GM12878 (cell line): ENCODE measurements at regions of chr14 and their contacts with region 1.

Region 1: DNA sequence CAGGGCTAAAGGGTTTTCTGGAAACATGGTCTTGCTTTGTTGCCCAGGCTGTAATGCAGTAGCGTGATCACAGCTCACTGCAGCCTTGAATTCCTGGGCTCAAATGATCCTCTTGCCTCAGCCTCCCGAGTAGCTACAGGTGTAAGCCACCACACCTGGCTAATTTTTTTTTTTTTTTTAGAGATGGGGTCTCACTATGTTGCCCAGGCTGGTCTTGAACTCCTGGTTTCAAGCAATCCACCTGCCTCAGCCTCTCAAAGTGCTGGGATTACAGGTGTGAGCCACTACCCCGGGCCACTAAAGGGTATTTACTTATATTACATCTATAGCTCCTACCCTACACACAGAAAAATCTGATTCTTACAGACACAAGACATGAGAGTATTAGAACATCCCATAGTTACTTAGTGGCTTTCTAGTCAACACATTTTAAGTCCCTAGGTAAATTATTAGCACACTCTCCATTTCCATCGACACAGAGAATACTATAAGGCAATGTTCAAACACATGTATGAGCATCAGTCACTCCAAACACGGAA is 6.2 kb upstream of the DCAF11 start:
- DNase-seq: no peak
- ATAC-seq: peak; percentile 55; the same call in 2 of the 3 replicates
- H3K4me3 ChIP-seq: no peak overlapping the region
- H3K27ac ChIP-seq: peak overlapping the region; percentile 69; the same call in 1 of the 2 replicates
- H3K4me1 ChIP-seq: peaks cover 7% of the 10 kb centered on the region
- H3K27me3 ChIP-seq: no peaks in the 10 kb centered on the region
- CTCF ChIP-seq: no peak
- EP300 ChIP-seq: no peak
- POLR2A ChIP-seq: no peak
- RAD21 ChIP-seq: no peak

Region 2: GRCh38 chr14:23694085-23694975 is 414.1 kb before region 1 on chr14:
- CTCF ChIA-PET with region 1: no interaction called
- POLR2A ChIA-PET with region 1: no interaction called
- RAD21 ChIA-PET with region 1: no interaction called
- SMC1A ChIA-PET with region 1: no interaction called
- in situ Hi-C with region 1: no loop called
- intact Hi-C with region 1: no loop called
- DNase-seq: no peak
- ATAC-seq: no peak
- H3K4me3 ChIP-seq: no peak overlapping the region
- H3K27ac ChIP-seq: no peak overlapping the region
- H3K4me1 ChIP-seq: no peaks in the 10 kb centered on the region
- H3K27me3 ChIP-seq: peaks cover 5 to 6% of the 10 kb centered on the region in 2 experiments
- CTCF ChIP-seq: no peak
- EP300 ChIP-seq: no peak
- POLR2A ChIP-seq: no peak
- RAD21 ChIP-seq: no peak

Region 3: DNA sequence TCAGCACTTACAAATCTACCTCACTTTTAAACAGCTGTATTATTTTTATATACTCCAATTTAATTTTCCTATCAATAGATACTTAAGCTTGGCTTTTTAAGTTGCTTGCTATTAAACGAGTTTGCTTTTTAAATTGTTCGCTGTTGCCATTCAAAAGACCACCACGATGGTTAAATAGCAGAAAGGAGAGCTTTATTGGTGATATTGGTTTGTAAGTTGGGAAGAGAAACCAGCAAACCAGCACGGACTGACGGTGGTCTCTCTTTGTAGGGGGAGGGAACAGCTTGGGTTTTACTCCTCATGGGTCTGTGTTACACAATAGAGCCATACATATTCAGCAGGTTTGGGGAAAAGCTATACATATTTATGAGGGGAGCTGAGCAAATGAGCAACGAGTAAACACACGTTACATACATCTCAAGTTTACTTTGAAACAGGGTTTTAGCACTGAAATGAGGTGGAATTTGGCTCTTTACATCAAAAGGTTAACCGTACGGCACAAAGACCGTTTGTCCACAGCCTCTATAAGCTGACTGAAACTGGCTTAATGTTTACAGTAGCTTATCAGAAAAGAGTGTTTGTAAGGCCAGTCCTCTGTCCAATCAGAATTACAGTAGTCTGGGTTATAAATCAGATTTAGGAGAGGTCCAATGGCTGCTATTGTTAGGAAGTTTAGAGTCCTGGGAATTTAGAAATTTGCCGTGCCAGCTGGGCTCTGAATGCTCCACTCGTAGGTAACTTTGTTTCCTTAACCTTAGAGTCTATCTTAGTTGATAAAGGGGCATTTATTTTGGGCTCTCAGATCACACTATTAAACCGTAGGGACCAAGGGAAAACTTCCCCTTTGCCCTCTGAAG is 224.5 kb before region 1 on chr14:
- CTCF ChIA-PET with region 1: no interaction called
- POLR2A ChIA-PET with region 1: no interaction called
- RAD21 ChIA-PET with region 1: no interaction called
- SMC1A ChIA-PET with region 1: no interaction called
- in situ Hi-C with region 1: no loop called
- intact Hi-C with region 1: no loop called
- DNase-seq: no peak
- ATAC-seq: no peak
- H3K4me3 ChIP-seq: no peak overlapping the region
- H3K27ac ChIP-seq: no peak overlapping the region
- H3K4me1 ChIP-seq: no peaks in the 10 kb centered on the region
- H3K27me3 ChIP-seq: no peaks in the 10 kb centered on the region
- CTCF ChIP-seq: no peak
- EP300 ChIP-seq: no peak
- POLR2A ChIP-seq: no peak
- RAD21 ChIP-seq: no peak

Region 4: GRCh38 chr14:24036169-24036962 is 72.0 kb before region 1 on chr14:
- CTCF ChIA-PET with region 1: interaction called, 10 read pairs
- POLR2A ChIA-PET with region 1: no interaction called
- RAD21 ChIA-PET with region 1: interaction called, 3 read pairs
- SMC1A ChIA-PET with region 1: interaction called, 3 read pairs
- in situ Hi-C with region 1: no loop called
- intact Hi-C with region 1: no loop called
- DNase-seq: no peak
- ATAC-seq: peak; percentile 91
- H3K4me3 ChIP-seq: peak overlapping the region; percentile 73
- H3K27ac ChIP-seq: peak overlapping the region; percentile 56
- H3K4me1 ChIP-seq: no peaks in the 10 kb centered on the region; the same call in 1 of the 2 replicates
- H3K27me3 ChIP-seq: no peaks in the 10 kb centered on the region
- CTCF ChIP-seq: peak; percentile 79 to 84 (median 82)
- EP300 ChIP-seq: no peak
- POLR2A ChIP-seq: peak; percentile 73
- RAD21 ChIP-seq: peak; percentile 69

Region 5: DNA sequence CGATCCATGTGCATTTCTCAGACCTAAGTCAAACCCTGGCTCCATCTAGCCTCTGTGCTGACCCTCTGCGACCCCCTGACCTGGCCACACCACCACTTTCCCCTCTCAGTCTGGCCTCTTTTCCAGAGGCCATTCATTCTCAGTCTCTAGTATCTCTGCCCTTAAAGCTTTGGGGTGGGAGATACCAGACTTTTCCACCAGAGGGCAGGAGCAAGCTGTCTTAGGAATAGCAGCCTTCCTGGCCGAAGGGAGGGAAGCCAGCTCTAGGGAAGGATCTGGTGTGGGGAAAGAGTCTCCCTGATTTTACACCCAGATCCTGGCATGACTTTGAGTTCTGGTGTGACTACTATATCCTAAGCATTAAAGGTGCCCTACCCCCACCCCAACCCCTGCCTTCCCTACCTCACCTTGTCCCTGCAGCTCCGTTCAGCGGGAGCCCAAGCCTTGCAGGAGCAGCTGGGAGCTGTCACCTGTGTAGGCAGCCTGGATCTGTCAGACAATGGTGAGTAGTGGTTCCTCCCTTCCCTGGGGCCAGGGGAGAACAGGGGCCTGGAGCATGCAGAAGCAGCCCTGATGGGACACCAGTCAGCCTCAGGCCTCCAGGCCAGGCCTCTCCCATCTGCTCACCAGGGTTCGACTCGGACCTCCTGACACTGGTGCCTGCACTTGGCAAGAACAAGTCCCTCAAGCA is 50.0 kb before region 1 on chr14:
- CTCF ChIA-PET with region 1: interaction called, 164 read pairs
- POLR2A ChIA-PET with region 1: interaction called, 6 read pairs
- RAD21 ChIA-PET with region 1: interaction called, 136 read pairs
- SMC1A ChIA-PET with region 1: interaction called, 122 read pairs
- in situ Hi-C with region 1: no loop called
- intact Hi-C with region 1: loop called (anchors 1 kb)
- DNase-seq: no peak
- ATAC-seq: peak; percentile 86
- H3K4me3 ChIP-seq: no peak overlapping the region
- H3K27ac ChIP-seq: no peak overlapping the region
- H3K4me1 ChIP-seq: no peaks in the 10 kb centered on the region
- H3K27me3 ChIP-seq: no peaks in the 10 kb centered on the region; a peak in 1 of 4 replicates
- CTCF ChIP-seq: peak; percentile 66 to 85 (median 80)
- EP300 ChIP-seq: no peak
- POLR2A ChIP-seq: no peak
- RAD21 ChIP-seq: peak; percentile 94

Region 6: DNA sequence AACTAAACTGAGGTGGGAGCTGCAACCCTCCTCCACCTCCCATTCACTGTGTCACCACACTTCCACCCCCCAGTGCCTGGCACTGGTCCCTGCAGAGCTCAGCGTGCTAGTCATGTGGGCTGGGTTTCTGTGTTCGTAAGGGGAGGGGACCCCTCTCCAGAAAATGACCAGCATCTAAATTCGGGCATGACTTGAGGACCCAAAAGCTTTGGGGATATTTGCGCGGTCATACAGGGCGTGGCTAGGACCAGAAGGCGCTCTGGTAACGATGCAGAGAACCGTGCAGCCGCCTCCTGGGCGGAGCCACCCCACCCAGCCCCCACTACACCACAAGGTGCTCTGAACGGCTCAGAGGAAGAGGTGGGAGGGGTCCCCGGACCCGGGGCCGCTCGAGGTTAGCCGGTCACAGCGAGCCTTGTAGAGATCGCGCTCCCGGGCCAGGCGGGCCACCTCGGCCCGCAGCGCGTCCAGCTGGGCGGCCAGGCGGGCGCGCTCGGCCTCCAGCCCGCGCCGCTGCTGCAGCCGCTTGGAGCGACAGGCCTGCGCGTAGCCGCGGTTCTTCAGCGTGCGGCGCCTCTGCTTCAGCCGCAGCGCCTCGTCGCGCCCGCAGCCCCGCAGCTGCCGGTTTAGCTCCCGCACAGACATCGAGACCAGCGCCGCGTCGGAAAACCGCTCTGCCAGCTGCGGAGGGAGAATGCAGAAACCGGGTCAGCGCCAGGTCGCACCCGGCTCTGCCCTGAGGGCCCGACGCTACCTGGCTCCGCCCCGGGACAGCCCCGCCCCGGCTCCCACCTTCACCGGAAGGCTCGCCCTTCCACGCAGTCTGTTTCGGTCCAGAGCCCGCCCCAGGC is 27.3 kb before region 1 on chr14:
- CTCF ChIA-PET with region 1: interaction called, 41 read pairs
- POLR2A ChIA-PET with region 1: interaction called, 6 read pairs
- RAD21 ChIA-PET with region 1: interaction called, 17 read pairs
- SMC1A ChIA-PET with region 1: interaction called, 14 read pairs
- in situ Hi-C with region 1: no loop called
- intact Hi-C with region 1: no loop called
- DNase-seq: no peak
- ATAC-seq: peak; percentile 95
- H3K4me3 ChIP-seq: peak overlapping the region; percentile 63; the same call in 1 of the 2 replicates
- H3K27ac ChIP-seq: peak overlapping the region; percentile 67
- H3K4me1 ChIP-seq: peaks cover 14% of the 10 kb centered on the region
- H3K27me3 ChIP-seq: no peaks in the 10 kb centered on the region
- CTCF ChIP-seq: no peak
- EP300 ChIP-seq: no peak
- POLR2A ChIP-seq: peak; percentile 77
- RAD21 ChIP-seq: no peak

Region 7: DNA sequence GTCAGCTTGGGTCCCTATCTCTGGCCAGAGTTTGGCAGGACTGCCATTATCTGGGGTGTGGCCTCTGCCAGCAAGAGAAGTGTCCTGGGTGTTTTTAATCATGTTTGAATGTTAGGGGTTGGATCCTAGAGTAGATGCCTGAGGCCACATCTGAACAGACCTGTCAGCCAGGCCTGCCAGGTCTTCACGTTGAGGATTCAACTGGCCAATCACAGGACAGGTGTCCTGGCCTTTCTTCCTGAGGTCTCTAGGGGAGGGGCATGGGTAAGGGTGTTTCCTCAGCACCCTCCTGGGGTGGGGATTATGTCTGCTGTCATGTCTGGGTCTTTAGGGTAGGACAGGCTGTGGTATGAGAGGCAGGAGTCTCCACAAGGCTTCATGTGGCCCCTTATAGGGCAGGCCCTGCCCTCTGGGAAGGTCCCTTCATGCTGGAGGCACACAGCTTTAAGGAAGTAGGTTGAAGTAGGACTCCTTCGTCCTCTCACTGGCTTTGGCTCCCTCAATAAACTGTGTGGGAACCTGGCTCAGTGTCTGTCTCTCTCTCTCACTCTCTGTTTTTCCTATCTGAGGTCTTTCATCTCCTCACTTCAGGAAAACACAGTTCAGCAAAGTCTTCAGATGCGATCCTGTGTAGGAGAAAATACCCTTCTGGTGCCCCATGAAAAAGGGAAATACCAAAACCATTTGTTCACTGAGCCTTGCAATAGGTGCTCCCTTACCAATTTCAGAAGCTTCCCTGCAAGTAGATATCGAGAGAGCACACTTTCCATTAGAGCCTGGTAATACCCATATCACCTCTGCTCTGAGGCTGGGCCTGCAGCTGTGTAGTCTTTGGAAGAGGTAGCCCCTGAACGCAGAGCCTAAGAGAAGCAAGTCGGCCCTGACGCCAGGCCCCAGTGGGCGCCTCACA is 15.4 kb after region 1 on chr14:
- CTCF ChIA-PET with region 1: interaction called, 9 read pairs
- POLR2A ChIA-PET with region 1: interaction called, 52 read pairs
- RAD21 ChIA-PET with region 1: interaction called, 16 read pairs
- SMC1A ChIA-PET with region 1: interaction called, 47 read pairs
- in situ Hi-C with region 1: no loop called
- intact Hi-C with region 1: no loop called
- DNase-seq: no peak
- ATAC-seq: peak; percentile 92
- H3K4me3 ChIP-seq: no peak overlapping the region
- H3K27ac ChIP-seq: peak overlapping the region; percentile 78
- H3K4me1 ChIP-seq: peaks cover 25% of the 10 kb centered on the region
- H3K27me3 ChIP-seq: no peaks in the 10 kb centered on the region
- CTCF ChIP-seq: no peak
- EP300 ChIP-seq: no peak
- POLR2A ChIP-seq: peak; percentile 43; the same call in 1 of the 2 replicates
- RAD21 ChIP-seq: no peak

Region 8: GRCh38 chr14:24141097-24141880 is 32.9 kb after region 1 on chr14 and contains the start of gene EMC9:
- CTCF ChIA-PET with region 1: interaction called, 39 read pairs
- POLR2A ChIA-PET with region 1: interaction called, 276 read pairs
- RAD21 ChIA-PET with region 1: interaction called, 69 read pairs
- SMC1A ChIA-PET with region 1: interaction called, 70 read pairs
- in situ Hi-C with region 1: no loop called
- intact Hi-C with region 1: no loop called
- DNase-seq: peak; percentile 97
- ATAC-seq: peak; percentile 92
- H3K4me3 ChIP-seq: peak within 1 kb of the TSS; percentile 94
- H3K27ac ChIP-seq: peak within 1 kb of the TSS; percentile 93
- H3K4me1 ChIP-seq: peaks cover 40% of the 10 kb centered on the region
- H3K27me3 ChIP-seq: no peaks in the 10 kb centered on the region
- CTCF ChIP-seq: peak in 2 of 3 experiments; percentile 27 to 35; a peak in 4 of 6 replicates
- EP300 ChIP-seq: peak in 1 of 2 experiments; percentile 58; a peak in 2 of 4 replicates
- POLR2A ChIP-seq: peak; percentile 94
- RAD21 ChIP-seq: no peak
- polyA plus RNA-seq, gene EMC9: 15.5 to 17.8 TPM

Region 9: DNA sequence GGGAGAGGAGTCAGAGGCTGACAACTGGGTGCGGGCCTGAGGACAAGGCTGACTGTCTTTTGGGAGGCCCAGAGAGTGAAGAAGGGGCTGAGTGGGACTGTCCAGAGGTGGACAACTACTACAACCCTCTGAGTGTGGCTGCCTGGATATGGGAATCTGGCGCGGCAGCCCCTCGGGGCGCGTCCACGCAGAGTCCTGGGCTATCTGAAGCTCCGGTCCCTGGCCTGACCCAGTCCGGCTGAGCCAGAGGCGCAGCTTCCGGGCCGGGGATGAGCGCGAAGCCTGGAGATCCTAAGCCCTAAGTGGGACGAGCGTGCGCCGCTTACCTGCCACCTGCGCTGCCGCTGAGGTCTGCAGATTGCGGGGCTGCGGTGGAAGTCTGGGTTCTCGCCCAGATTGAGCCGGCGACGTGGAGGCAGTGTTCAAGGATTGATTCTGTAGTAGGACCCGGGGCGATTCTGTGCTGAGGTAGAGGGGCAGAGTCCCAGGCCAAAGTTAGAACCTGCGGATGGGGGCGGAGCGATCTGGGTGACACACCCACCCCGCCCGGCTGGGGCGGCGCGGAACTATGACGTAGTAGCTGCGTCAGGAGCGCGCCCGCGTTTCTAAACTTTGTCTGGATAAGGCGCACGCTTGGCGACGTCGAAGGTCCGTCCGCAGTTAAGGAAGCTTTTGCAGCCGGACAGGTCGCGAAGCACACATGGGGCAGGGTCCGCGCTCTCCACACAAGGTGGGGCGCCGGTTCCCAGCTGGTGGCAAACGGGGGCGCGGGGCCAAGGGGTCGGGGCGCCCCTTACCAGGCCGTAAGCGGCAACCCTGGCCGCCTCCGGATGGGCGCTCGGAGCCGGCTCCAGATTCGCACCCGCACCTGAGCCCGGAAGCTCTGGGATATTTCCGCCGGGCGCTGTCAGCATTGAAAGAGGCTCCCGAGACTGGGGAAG is 191.1 kb after region 1 on chr14 and contains the starts of genes DHRS1 and NOP9:
- CTCF ChIA-PET with region 1: interaction called, 29 read pairs
- POLR2A ChIA-PET with region 1: no interaction called
- RAD21 ChIA-PET with region 1: interaction called, 4 read pairs
- SMC1A ChIA-PET with region 1: interaction called, 16 read pairs
- in situ Hi-C with region 1: no loop called
- intact Hi-C with region 1: no loop called
- DNase-seq: peak; percentile 65
- ATAC-seq: peak; percentile 79
- H3K4me3 ChIP-seq: peak within 1 kb of the TSS; percentile 96
- H3K27ac ChIP-seq: peak within 1 kb of the TSS; percentile 51
- H3K4me1 ChIP-seq: peaks cover 25% of the 10 kb centered on the region
- H3K27me3 ChIP-seq: no peaks in the 10 kb centered on the region
- CTCF ChIP-seq: no peak
- EP300 ChIP-seq: no peak
- POLR2A ChIP-seq: peak; percentile 85
- RAD21 ChIP-seq: no peak
- polyA plus RNA-seq, gene DHRS1: 44.6 to 45.0 TPM
- polyA plus RNA-seq, gene NOP9: 2.4 to 3.4 TPM